ENCODE measurements at regions of chr4 and their contacts with region 1.

Region 1: DNA sequence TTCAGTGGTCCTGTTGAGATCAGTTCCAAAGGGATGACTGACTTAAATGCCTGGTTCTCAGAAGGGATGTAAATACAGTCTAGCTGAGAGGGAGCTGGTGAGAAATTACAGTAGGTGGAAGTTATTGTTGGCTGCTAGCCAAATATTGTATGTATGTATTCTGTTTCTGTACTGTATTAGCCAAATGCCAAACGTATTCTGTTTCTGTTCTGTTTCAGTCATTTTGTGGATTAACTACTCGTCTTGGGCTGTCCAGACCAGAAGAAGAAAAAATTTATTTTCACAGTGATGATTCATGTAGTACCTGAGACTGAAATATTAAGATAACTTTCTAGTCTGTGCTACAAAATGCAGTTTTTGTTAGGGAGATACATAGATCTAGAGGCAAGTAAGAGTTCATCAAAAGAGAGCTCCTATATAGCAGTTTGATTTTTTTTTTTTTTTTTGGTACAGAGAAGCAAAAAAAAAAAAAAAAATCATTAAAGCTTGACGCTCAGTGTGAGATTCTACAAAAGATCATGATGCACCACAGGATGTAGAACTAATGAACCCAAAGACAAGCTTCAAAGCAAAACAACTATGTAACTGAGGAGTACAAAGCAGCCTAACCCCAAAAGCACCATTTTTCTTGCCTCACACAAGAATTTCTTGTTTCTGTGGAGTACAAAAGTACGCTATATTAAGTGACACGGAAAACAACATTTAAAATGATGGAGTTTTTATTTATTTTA is 54.8 kb downstream of the CASP6 start:
- DNase-seq: peak; percentile 75
- H3K4me3 Mint-ChIP-seq: peak overlapping the region; percentile 73
- H3K27ac Mint-ChIP-seq: peak overlapping the region; percentile 86
- H3K4me1 Mint-ChIP-seq: peaks cover 38% of the 10 kb centered on the region
- H3K27me3 Mint-ChIP-seq: no peaks in the 10 kb centered on the region

Region 2: DNA sequence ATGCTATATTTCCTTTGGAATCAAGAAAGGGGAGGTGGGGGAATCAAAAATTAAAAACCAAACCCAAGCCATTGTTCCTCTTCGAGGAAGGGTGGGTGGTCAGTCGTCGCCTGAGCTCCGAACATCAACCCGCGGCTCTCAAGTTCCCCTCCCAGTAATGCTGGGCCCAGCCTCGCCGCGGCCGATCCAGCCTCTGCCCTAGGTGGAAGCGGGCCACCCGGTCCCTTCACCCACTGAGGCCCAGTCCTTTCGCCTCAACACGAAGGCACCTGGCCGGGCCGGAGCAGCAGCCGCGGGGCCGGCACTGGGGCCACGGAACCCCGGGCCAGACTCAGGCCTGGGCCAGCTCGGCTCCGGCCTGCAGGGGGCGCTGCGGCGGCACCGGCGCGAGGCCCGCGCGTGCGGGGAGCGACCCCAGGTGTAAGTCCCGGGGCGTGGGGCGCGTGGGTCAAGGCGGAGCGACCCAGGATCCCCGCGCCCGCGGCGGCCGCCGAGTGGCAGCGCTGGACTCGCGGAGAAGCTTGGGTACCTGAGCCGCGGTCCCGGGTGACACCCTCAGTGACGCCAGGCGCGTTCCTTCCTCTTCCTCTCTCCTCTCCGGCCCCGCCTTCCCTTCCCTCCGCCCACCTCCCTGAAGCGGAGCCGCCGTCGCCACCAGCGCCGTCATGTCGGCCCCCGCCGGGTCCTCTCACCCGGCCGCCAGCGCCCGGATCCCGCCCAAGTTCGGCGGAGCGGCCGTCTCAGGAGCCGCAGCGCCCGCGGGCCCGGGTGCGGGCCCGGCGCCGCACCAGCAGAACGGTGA is 215.0 kb before region 1 on chr4 and contains the start of gene SEC24B:
- intact Hi-C with region 1: loop called (anchors 2 kb)
- DNase-seq: peak; percentile 97
- H3K4me3 Mint-ChIP-seq: peak within 1 kb of the TSS; percentile 90
- H3K27ac Mint-ChIP-seq: peak within 1 kb of the TSS; percentile 85
- H3K4me1 Mint-ChIP-seq: peaks cover 50% of the 10 kb centered on the region
- H3K27me3 Mint-ChIP-seq: no peaks in the 10 kb centered on the region
- total RNA-seq, gene SEC24B: 32.5 and 33.6 TPM in 2 replicates

Region 3: DNA sequence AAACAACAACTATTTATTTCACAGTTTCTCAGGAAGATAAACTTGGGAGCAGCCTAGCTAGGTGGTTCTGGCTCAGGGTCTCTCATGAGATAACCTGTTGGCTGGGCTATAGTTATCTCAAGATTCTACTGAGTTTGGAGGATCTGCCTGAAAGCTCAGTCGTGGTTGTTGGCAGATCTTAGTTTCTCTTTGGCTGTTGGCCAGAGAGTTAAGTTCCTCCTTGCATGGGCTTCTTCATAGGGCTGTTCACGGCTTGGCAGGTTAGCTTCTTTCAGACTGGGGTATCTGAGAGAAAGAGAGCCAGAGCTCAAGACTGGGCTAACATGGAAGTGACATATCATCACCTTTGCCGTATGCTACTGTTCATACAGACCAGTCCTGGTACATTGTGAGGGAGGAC is 186.1 kb before region 1 on chr4:
- intact Hi-C with region 1: no loop called
- DNase-seq: no peak
- H3K4me3 Mint-ChIP-seq: no peak overlapping the region
- H3K27ac Mint-ChIP-seq: peak overlapping the region; percentile 17
- H3K4me1 Mint-ChIP-seq: peaks cover 9% of the 10 kb centered on the region
- H3K27me3 Mint-ChIP-seq: no peaks in the 10 kb centered on the region

Region 4: DNA sequence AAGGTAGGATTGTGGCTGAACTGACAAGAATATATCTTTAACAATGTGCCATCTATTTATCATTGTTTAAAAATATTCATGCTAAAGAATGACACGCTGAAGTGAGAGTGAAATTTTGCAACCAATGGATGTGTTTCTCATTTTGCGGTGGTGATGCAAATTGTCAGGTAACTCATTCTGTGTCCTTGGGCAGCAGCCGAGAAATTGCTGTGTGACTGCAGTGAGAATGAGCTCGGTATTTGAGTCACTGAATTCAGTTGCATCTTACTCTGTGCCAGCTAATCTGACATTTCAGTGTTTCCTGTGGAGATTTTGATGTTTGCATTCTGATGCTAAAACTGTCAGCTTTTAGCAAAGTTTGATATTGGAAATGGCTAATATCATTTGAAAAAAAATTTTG is 60.3 kb before region 1 on chr4:
- intact Hi-C with region 1: loop called (anchors 2 kb)
- DNase-seq: peak; percentile 73
- H3K4me3 Mint-ChIP-seq: peak overlapping the region; percentile 4
- H3K27ac Mint-ChIP-seq: peak overlapping the region; percentile 6
- H3K4me1 Mint-ChIP-seq: peaks cover 54% of the 10 kb centered on the region
- H3K27me3 Mint-ChIP-seq: no peaks in the 10 kb centered on the region